Right ventricle myocardium inferior (tissue), 1 donor: ENCODE measurements at regions of chr3 and their contacts with region 1.

Region 1: GRCh38 chr3:152961323-152961722 is 126.4 kb downstream of the P2RY1 start:
- DNase-seq: no peak
- ATAC-seq: no peak

Region 2: GRCh38 chr3:152695840-152696239 is 265.5 kb before region 1 on chr3:
- intact Hi-C with region 1: loop called (anchors 5 kb)
- DNase-seq: no peak
- ATAC-seq: no peak